ENCODE measurements at regions of chr11 and their contacts with region 1.

Region 1: GRCh38 chr11:57249384-57250319 is 12.6 kb upstream of the APLNR start:
- DNase-seq: peak; percentile 81
- H3K4me3 ChIP-seq: peak overlapping the region in 3 of 8 donors; percentile 4 to 28 (median 13)
- H3K27ac ChIP-seq: peak overlapping the region in 5 of 8 donors; percentile 18 to 50 (median 40)
- H3K4me1 ChIP-seq: peaks cover 0 to 25% (median 12%) of the 10 kb centered on the region in 6 donors
- H3K27me3 ChIP-seq: peaks cover 0 to 19% (median 0%) of the 10 kb centered on the region in 7 donors
- CTCF ChIP-seq: peak; percentile 18 to 85 (median 71)
- POLR2A ChIP-seq: no peak

Region 2: GRCh38 chr11:56841210-56841810 is 408.3 kb before region 1 on chr11:
- intact Hi-C with region 1: loop called (anchors 5 kb)
- DNase-seq: no peak
- H3K4me3 ChIP-seq: no peak overlapping the region
- H3K27ac ChIP-seq: peak overlapping the region in 1 of 8 donors; percentile 14
- H3K4me1 ChIP-seq: peaks cover 0 to 5% (median 0%) of the 10 kb centered on the region in 6 donors
- H3K27me3 ChIP-seq: no peaks in the 10 kb centered on the region
- CTCF ChIP-seq: peak in 10 of 11 experiments; percentile 18 to 69 (median 58)
- POLR2A ChIP-seq: no peak

Region 3: DNA sequence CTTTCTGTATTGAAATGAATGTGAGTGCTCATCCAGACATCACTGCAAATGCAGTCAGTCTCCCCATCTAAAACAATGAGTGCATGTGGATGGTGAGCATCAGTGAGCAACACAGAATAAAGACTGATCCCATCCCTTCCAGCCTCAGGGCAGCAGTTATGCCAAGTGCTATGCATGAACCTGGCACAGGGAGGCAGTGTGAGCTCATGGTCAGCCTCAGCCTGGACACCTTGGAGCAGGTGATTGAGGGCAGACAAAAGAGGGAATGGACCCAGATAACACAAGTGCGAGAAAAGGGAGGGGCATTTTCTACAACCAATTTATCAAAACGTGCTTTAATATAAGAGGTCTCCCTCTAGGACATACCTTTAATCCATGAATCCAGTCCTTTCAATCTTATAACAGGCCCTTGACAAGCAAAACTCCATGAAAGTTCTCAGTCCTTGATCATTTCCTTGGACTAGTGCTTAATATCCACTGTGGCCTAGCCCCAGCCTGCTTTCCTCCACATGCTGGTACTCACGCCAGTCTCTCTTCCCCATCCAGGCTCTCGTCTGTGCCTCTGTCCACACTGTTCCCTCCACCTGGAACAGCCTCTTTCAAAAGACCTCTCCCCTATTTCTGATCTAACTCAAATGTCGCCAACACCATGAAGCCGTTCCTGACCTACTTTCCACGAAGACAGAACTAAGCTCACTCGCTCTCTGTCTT is 118.4 kb before region 1 on chr11:
- intact Hi-C with region 1: loop called (anchors 5 kb)
- DNase-seq: no peak
- H3K4me3 ChIP-seq: no peak overlapping the region
- H3K27ac ChIP-seq: no peak overlapping the region
- H3K4me1 ChIP-seq: no peaks in the 10 kb centered on the region
- H3K27me3 ChIP-seq: peaks cover 0 to 5% (median 0%) of the 10 kb centered on the region in 7 donors
- CTCF ChIP-seq: peak; percentile 17 to 65 (median 51)
- POLR2A ChIP-seq: no peak

Region 4: GRCh38 chr11:57426929-57427726 is 177.5 kb after region 1 on chr11 and contains the start of gene SLC43A3:
- intact Hi-C with region 1: no loop called
- DNase-seq: peak; percentile 93
- H3K4me3 ChIP-seq: peak within 1 kb of the TSS; percentile 41 to 76 (median 51)
- H3K27ac ChIP-seq: peak within 1 kb of the TSS; percentile 82 to 93 (median 90)
- H3K4me1 ChIP-seq: peaks cover 28 to 60% (median 45%) of the 10 kb centered on the region in 6 donors
- H3K27me3 ChIP-seq: no peaks in the 10 kb centered on the region
- CTCF ChIP-seq: peak in 2 of 11 experiments; percentile 6 to 12
- POLR2A ChIP-seq: no peak
- total RNA-seq, gene SLC43A3: 29.9 to 72.5 (median 41.7) TPM

Measured in spleen (tissue), 13 donors.